BJ (cell line): ENCODE measurements at regions of chr2 and their contacts with region 1.

Region 1: GRCh38 chr2:170851635-170852034 is 34.9 kb downstream of the GAD1 start:
- DNase-seq: no peak
- H3K4me3 ChIP-seq: no peak overlapping the region
- H3K27me3 ChIP-seq: no peaks in the 10 kb centered on the region
- CTCF ChIP-seq: no peak

Region 2: DNA sequence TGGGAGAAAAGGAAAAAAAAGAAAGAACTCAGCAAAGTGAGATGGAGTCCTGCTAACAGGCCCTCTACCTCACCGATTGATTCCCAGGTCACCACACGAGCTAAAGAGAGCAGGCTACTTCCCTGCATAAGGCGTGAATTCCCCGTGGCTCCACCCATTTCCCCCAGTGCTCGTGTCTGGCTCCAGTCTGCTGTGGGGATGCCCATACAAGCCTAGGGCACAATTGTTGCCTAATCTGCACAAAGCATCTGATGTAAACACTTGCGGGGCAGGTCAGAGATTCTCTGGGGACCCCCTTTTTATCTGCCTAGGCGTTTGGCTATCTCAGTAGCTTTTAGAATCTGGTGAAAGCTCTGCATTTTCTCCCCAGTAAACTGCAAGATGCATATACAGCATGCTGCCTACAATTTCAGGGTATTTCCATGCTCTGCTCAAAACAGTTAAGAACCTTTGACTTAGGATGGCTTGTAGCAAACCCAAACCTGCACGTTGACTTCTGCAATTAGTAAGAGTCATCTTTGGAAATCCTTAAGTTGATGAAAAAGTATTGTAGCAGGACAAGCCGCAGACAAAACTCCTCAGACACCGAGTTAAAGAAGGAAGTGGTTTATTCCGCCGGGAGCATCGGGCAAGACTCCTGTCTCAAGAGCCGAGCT is 638.9 kb before region 1 on chr2:
- CTCF ChIA-PET with region 1: no interaction called
- POLR2A ChIA-PET with region 1: interaction called, 11 read pairs
- DNase-seq: no peak
- H3K4me3 ChIP-seq: no peak overlapping the region
- H3K27me3 ChIP-seq: no peaks in the 10 kb centered on the region
- CTCF ChIP-seq: no peak

Region 3: DNA sequence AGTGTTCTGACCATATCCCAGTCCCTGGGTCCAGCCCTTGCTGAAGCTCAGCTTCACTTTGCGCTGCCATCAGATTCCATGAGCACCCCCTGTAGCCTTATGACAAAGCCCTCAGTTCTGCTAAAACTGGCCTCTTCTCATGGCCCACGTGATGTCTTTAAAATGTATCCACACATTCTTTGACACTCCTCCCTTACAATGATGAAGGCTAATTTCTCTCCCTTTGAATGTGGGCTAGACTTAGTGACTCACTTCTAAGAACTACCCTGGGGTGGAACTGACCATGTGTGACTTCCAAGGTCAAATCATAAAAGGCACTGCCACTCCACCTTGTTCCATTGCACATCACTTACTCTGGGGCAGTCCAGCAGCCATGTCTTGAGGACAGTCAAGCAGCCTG is 32.0 kb after region 1 on chr2:
- CTCF ChIA-PET with region 1: no interaction called
- POLR2A ChIA-PET with region 1: no interaction called
- DNase-seq: no peak
- H3K4me3 ChIP-seq: no peak overlapping the region
- H3K27me3 ChIP-seq: peaks cover 5% of the 10 kb centered on the region
- CTCF ChIP-seq: no peak